ENCODE measurements at regions of chr9 and their contacts with region 1.

Region 1: DNA sequence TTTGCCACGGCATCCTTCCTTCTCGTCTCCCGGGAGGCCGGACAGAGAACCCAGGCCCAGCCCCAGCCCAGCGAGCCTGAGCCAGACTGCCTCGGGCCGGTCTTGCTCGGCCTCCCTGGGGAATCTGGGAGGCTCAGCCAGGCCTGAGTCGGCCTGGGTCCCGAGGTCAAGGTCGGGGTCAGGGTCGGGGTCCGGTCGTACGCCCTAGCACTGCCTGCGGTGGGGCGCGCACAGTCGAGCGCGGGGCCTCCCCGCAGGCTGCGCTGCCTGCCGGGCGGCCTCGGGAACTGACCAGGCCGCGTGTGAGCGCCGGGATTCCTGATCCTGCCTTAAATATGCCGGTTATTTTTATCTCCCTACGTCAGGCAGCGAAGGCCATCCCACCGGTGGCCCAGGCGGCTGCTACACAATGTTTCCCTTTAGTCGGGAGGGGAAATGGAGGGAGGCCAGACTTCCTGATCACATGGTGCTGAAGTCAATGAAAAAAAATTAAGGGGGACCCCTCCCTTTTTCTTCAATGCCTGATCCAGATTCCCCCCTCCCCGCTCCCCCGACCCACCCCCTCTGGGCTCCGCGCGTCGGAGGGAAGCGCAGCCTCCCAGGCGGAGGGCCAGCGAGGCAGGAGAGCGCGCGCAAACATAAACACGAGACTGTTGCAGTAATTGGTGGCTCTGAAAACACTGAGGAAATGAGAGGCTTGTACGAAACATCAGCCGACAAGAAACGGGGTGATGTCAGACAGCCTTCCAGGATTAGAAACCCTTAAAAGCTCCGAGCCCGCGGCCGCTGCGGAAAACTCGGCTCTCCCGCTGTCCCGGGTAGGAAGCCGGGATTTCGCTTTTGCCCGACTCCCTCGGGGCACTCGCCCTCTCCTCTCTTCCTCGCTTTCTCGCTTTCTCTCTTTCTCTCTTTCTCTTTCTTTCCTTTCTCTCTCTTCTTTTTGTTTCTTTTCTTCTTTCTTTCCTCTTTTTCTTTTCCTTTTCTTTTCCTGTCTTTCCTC is 148.2 kb upstream of the KLF4 start:
- DNase-seq: peak; percentile 92 to 95 (median 95)
- ATAC-seq: peak; percentile 90 to 96 (median 94)
- H3K4me3 ChIP-seq: peak overlapping the region in 11 of 12 donors; percentile 26 to 61 (median 51)
- H3K27ac ChIP-seq: peak overlapping the region; percentile 95 to 100 (median 96)
- H3K4me1 ChIP-seq: peaks cover 0 to 32% (median 14%) of the 10 kb centered on the region in 12 donors
- H3K27me3 ChIP-seq: no peaks in the 10 kb centered on the region
- CTCF ChIP-seq: peak in 7 of 12 donors; percentile 9 to 56 (median 39)
- POLR2A ChIP-seq: peak; percentile 79 to 99

Region 2: DNA sequence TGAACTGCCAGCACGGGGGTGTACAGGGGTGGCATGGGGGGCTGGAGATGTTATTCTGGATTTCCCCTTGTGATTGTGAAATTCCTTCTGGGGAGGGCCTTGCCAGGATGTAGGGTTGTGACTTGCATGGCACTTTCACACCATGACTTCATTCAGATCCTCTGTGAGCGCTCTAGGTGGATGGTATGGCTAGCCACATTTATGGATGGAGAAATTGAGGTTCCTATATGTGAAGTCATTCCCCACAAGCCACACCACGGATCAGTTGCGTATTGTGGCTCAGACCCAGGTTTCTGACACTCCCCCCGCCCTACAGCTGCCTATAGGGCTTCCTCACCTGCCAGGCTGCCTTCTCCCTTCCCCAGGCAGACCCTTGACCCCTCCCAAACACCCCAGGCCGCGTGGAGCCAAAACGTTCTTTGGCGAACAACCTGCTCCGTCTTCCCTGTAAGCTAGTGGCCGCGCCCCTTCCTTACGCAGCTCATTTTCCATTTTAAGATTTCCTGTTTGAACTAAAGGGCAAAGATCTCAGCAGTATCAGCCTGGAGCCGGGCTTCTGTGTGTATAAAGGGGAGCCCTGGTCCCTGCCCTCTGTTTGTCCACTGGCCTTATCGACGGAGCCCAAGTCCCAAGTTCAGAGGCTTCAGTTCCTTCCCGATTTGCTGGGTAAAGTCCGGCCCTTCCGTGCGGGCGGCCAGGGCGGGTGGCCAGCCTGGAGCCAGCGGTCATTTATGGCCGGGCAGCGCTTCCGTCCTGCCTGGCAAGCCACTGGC is 50.3 kb before region 1 on chr9:
- intact Hi-C with region 1: loop called in 5 of 10 experiments (anchors 5 to 10 kb)
- DNase-seq: peak; percentile 65 to 77 (median 75)
- ATAC-seq: peak; percentile 85 to 94 (median 86)
- H3K4me3 ChIP-seq: peak overlapping the region in 10 of 12 donors; percentile 10 to 49 (median 34)
- H3K27ac ChIP-seq: peak overlapping the region; percentile 66 to 91 (median 85)
- H3K4me1 ChIP-seq: peaks cover 0 to 24% (median 10%) of the 10 kb centered on the region in 12 donors
- H3K27me3 ChIP-seq: no peaks in the 10 kb centered on the region
- CTCF ChIP-seq: no peak
- POLR2A ChIP-seq: peak in 1 of 2 donors; percentile 14

Region 3: DNA sequence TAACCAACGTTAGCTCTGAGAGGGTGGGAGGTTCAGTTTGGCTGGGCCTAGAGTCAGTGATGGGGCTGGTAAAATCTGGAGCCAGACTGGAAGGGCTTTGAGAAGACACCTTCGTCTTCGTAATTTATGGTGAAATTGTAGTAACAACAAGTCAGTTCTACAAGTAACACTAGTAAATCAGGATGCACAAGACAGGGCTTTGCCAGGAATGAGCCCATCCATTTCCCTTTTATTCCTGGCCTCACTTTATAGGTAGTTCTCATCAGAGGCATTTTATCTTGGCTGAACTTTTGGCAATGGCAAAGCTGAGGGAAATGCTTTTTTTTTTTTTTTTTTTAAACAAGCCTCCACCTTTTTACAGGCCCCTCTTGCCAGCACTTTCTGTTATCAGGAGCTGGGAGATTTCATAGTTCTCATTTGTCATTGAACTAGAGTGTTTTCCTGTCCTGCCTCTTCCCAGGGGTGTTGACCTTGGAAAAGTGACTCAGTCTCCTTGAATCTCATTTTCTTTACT is 37.6 kb before region 1 on chr9:
- intact Hi-C with region 1: loop called in 3 of 10 experiments (anchors 2 to 5 kb)
- DNase-seq: peak in 3 of 5 donors; percentile 21 to 57 (median 27)
- ATAC-seq: peak; percentile 83 to 96 (median 88)
- H3K4me3 ChIP-seq: no peak overlapping the region
- H3K27ac ChIP-seq: peak overlapping the region; percentile 35 to 71 (median 65)
- H3K4me1 ChIP-seq: peaks cover 0 to 20% (median 11%) of the 10 kb centered on the region in 12 donors
- H3K27me3 ChIP-seq: no peaks in the 10 kb centered on the region
- CTCF ChIP-seq: no peak
- POLR2A ChIP-seq: no peak

Region 4: DNA sequence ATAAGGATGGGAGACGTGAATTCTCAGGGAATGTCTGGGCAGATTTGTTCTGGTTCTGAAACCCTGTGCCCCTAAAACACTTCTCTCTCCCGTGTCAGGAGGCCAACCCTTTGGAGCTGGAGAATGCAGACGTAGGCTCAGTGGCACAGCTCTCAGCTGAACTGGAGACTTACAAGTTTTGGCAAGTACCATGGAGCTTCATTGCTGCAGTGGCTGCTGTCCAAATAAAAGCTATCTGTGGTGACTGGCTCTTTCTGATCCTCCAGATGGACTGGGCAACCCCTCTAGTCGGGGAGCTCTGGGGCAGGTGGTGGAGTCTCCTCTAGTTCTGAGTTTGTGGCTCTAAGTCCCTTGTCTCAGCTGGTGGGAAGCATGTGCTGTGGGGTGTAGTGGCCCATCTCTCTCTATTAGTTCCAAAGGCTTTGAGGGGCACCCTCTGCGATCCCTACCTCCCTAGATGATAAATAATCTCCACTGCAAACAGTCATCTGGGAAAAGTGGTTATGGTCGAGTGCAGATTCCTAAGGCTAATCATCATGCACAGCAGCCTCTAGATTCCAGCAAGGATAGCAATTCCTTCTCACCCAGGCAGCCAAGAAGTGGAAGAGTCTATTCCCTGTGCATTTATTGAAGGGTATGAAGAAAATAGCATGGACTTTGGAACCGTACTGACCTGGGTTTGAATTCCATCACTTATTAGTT is 56.1 kb after region 1 on chr9:
- intact Hi-C with region 1: loop called in 1 of 10 experiments (anchors 10 kb)
- DNase-seq: no peak
- ATAC-seq: peak in 1 of 4 donors; percentile 29
- H3K4me3 ChIP-seq: no peak overlapping the region
- H3K27ac ChIP-seq: no peak overlapping the region
- H3K4me1 ChIP-seq: peaks cover 0 to 10% (median 0%) of the 10 kb centered on the region in 12 donors
- H3K27me3 ChIP-seq: no peaks in the 10 kb centered on the region
- CTCF ChIP-seq: no peak
- POLR2A ChIP-seq: no peak

Region 5: GRCh38 chr9:107711540-107711939 is 73.8 kb after region 1 on chr9:
- intact Hi-C with region 1: no loop called
- DNase-seq: peak in 1 of 5 donors; percentile 15
- ATAC-seq: peak in 2 of 4 donors; percentile 21 to 31
- H3K4me3 ChIP-seq: no peak overlapping the region
- H3K27ac ChIP-seq: no peak overlapping the region
- H3K4me1 ChIP-seq: peaks cover 0 to 26% (median 3%) of the 10 kb centered on the region in 12 donors
- H3K27me3 ChIP-seq: no peaks in the 10 kb centered on the region
- CTCF ChIP-seq: no peak
- POLR2A ChIP-seq: no peak

Region 6: GRCh38 chr9:107732781-107733522 is 95.2 kb after region 1 on chr9:
- intact Hi-C with region 1: loop called in 1 of 10 experiments (anchors 10 kb)
- DNase-seq: peak in 3 of 5 donors; percentile 37 to 59 (median 55)
- ATAC-seq: peak; percentile 38 to 74 (median 62)
- H3K4me3 ChIP-seq: peak overlapping the region in 10 of 12 donors; percentile 0 to 38 (median 13)
- H3K27ac ChIP-seq: peak overlapping the region; percentile 66 to 91 (median 83)
- H3K4me1 ChIP-seq: peaks cover 0 to 37% (median 26%) of the 10 kb centered on the region in 12 donors
- H3K27me3 ChIP-seq: no peaks in the 10 kb centered on the region
- CTCF ChIP-seq: no peak
- POLR2A ChIP-seq: no peak

Region 7: GRCh38 chr9:107749787-107750444 is 112.2 kb after region 1 on chr9:
- intact Hi-C with region 1: loop called in 1 of 10 experiments (anchors 10 kb)
- DNase-seq: peak; percentile 85 to 93 (median 86)
- ATAC-seq: peak; percentile 93 to 95 (median 94)
- H3K4me3 ChIP-seq: no peak overlapping the region
- H3K27ac ChIP-seq: peak overlapping the region; percentile 50 to 90 (median 75)
- H3K4me1 ChIP-seq: peaks cover 0 to 52% (median 32%) of the 10 kb centered on the region in 12 donors
- H3K27me3 ChIP-seq: no peaks in the 10 kb centered on the region
- CTCF ChIP-seq: no peak
- POLR2A ChIP-seq: no peak

Region 8: DNA sequence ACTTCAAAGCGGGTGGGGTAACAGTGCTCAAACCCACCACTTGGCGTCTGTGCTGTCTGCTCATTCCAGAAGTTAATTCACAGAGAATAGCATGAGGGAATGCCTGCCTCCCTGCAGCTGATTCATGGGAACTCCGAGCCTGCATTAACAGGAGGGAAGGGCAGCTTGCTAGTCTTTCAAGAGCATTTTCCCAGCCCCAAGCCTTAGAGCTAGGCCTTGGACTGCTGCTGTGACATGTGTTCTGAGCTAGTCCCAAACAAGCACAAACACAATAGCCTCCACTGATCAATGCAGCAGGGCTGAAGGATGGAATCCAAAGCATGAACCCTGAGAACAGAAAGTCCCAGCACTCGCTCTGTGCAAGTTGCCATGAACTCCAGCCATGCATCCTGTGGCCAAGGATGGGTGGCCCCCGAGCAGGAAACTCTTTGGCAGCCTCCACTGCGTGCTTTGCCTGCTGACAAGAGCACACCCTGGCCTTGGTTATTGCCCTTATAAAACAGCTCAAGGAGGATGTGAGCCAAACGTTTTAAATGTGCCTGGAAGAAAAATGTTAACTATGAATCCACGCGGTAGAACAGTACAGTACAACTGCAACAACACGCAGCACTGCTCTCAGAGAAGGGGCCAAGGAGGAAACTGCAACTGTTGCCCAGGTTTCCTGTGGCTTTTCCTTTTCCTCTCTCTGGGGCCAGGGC is 504.9 kb after region 1 on chr9:
- intact Hi-C with region 1: loop called in 3 of 10 experiments (anchors 2 to 10 kb)
- DNase-seq: peak; percentile 76 to 85 (median 80)
- ATAC-seq: peak; percentile 98 to 99 (median 98)
- H3K4me3 ChIP-seq: no peak overlapping the region
- H3K27ac ChIP-seq: peak overlapping the region; percentile 53 to 91 (median 80)
- H3K4me1 ChIP-seq: peaks cover 0 to 25% (median 16%) of the 10 kb centered on the region in 12 donors
- H3K27me3 ChIP-seq: no peaks in the 10 kb centered on the region
- CTCF ChIP-seq: no peak
- POLR2A ChIP-seq: peak in 1 of 2 donors; percentile 5